GM10248 (cell line): ENCODE measurements at regions of chr2 and their contacts with region 1.

Region 1: GRCh38 chr2:237434866-237435311 is 20.9 kb upstream of the COL6A3 start:
- DNase-seq: no peak
- CTCF ChIP-seq: no peak

Region 2: GRCh38 chr2:237421542-237422116 is 13.3 kb before region 1 on chr2:
- CTCF ChIA-PET with region 1: interaction called, 13 read pairs
- POLR2A ChIA-PET with region 1: no interaction called
- DNase-seq: peak; percentile 68
- CTCF ChIP-seq: peak; percentile 58